ENCODE measurements at regions of chr4 and their contacts with region 1.

Region 1: DNA sequence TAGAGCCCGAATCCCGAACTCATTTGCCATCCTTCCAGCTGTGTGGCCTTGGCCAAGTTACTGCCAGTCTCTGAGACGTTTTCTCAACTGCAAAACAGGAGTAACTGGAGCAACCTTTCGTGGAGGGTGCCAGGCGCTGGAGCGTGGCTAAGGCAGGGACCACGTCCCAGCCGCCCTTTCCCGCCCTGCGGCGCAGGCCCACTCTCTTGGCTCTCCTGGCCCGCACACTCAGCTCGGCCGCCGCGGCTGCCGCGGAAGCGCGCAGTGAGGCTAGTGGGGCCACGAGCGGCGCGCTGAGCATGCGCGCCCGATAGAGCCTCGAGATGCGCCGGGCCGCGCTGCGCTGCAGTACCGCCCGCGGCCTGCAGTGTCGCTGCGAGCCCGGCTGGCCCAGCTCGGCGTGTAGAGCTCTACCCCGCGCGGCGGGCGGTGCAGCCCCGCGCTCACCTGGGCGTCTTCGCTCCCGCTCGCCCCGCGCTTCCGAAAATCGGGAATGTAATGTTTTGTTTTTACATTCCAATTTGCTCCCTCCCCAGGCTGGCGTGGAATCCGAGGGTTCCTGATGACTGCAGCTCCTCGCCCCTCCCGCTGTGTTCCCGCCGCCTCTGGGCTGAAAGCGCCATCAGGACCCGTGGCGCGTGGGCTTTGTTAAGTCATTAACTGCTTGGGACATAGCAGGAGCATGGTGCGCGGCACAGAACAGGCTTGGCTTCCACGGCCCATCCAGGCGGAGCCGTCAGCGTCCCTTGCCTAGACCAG is 4.0 kb upstream of the ZNF518B start:
- DNase-seq: no peak
- H3K4me3 ChIP-seq: peak overlapping the region; percentile 53
- H3K27ac ChIP-seq: no peak overlapping the region
- H3K27me3 ChIP-seq: peaks cover 13% of the 10 kb centered on the region
- CTCF ChIP-seq: peak; percentile 74

Region 2: DNA sequence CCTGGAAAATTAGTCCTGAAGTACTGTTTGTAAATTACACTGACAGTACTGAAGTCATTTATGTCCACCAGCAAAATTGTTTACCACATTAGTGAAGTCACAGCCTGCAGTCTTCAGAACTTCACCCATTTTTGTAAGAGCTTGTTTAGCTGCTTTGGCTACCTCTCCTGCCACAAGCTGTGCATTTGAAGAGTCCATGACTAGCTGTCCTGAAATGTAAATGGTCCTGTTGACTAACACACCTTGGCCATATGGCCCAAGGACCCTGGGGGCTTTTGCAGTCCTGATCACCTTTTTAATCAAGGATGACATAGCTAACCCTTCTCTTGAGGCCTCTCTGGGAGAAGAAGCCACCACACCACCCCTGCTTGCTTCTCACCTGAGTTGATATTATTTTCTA is 17.4 kb after region 1 on chr4:
- CTCF ChIA-PET with region 1: interaction called, 12 read pairs
- POLR2A ChIA-PET with region 1: no interaction called
- DNase-seq: no peak
- H3K4me3 ChIP-seq: no peak overlapping the region
- H3K27ac ChIP-seq: no peak overlapping the region
- H3K27me3 ChIP-seq: no peaks in the 10 kb centered on the region
- CTCF ChIP-seq: no peak

Region 3: GRCh38 chr4:10506077-10506476 is 44.8 kb after region 1 on chr4:
- CTCF ChIA-PET with region 1: no interaction called
- POLR2A ChIA-PET with region 1: no interaction called
- DNase-seq: no peak
- H3K4me3 ChIP-seq: no peak overlapping the region
- H3K27ac ChIP-seq: no peak overlapping the region
- H3K27me3 ChIP-seq: no peaks in the 10 kb centered on the region
- CTCF ChIP-seq: no peak